ENCODE measurements at regions of chr1 and their contacts with region 1.

Region 1: GRCh38 chr1:7704214-7705047 is 66.7 kb upstream of the VAMP3 start:
- DNase-seq: peak; percentile 89 to 92 (median 91)
- H3K4me3 ChIP-seq: peak overlapping the region in 1 of 2 donors; percentile 54
- H3K4me3 Mint-ChIP-seq: peak overlapping the region in 6 of 8 donors; percentile 87 to 90 (median 89)
- H3K27ac ChIP-seq: no peak overlapping the region
- H3K27ac Mint-ChIP-seq: peak overlapping the region in 2 of 7 donors; percentile 86 to 93
- H3K4me1 ChIP-seq: peaks cover 8% of the 10 kb centered on the region
- H3K4me1 Mint-ChIP-seq: peaks cover 8 to 38% (median 20%) of the 10 kb centered on the region in 4 donors
- H3K27me3 ChIP-seq: peaks cover 13% of the 10 kb centered on the region
- H3K27me3 Mint-ChIP-seq: peaks cover 16 to 30% of the 10 kb centered on the region in 2 donors

Region 2: GRCh38 chr1:7680207-7680954 is 24.1 kb before region 1 on chr1:
- CTCF ChIA-PET with region 1: no interaction called
- POLR2A ChIA-PET with region 1: interaction called, 11 read pairs
- intact Hi-C with region 1: loop called (anchors 1 kb)
- DNase-seq: peak in 4 of 5 donors; percentile 48 to 55 (median 50)
- H3K4me3 ChIP-seq: peak overlapping the region; percentile 42 to 66
- H3K4me3 Mint-ChIP-seq: peak overlapping the region; percentile 74 to 88 (median 80)
- H3K27ac ChIP-seq: peak overlapping the region; percentile 31
- H3K27ac Mint-ChIP-seq: peak overlapping the region in 1 of 7 donors; percentile 42
- H3K4me1 ChIP-seq: peaks cover 9% of the 10 kb centered on the region
- H3K4me1 Mint-ChIP-seq: peaks cover 0 to 1% (median 0%) of the 10 kb centered on the region in 4 donors
- H3K27me3 ChIP-seq: no peaks in the 10 kb centered on the region
- H3K27me3 Mint-ChIP-seq: peaks cover 0 to 5% of the 10 kb centered on the region in 2 donors

Region 3: GRCh38 chr1:7743346-7743745 is 38.9 kb after region 1 on chr1:
- CTCF ChIA-PET with region 1: no interaction called
- POLR2A ChIA-PET with region 1: interaction called, 22 read pairs
- intact Hi-C with region 1: no loop called
- DNase-seq: no peak
- H3K4me3 ChIP-seq: no peak overlapping the region
- H3K4me3 Mint-ChIP-seq: no peak overlapping the region
- H3K27ac ChIP-seq: no peak overlapping the region
- H3K27ac Mint-ChIP-seq: no peak overlapping the region
- H3K4me1 ChIP-seq: peaks cover 3% of the 10 kb centered on the region
- H3K4me1 Mint-ChIP-seq: peaks cover 0 to 1% (median under 1%) of the 10 kb centered on the region in 4 donors
- H3K27me3 ChIP-seq: no peaks in the 10 kb centered on the region
- H3K27me3 Mint-ChIP-seq: no peaks in the 10 kb centered on the region